CD4-positive, alpha-beta T cell (primary cell): ENCODE measurements at regions of chr13 and their contacts with region 1.

Region 1: DNA sequence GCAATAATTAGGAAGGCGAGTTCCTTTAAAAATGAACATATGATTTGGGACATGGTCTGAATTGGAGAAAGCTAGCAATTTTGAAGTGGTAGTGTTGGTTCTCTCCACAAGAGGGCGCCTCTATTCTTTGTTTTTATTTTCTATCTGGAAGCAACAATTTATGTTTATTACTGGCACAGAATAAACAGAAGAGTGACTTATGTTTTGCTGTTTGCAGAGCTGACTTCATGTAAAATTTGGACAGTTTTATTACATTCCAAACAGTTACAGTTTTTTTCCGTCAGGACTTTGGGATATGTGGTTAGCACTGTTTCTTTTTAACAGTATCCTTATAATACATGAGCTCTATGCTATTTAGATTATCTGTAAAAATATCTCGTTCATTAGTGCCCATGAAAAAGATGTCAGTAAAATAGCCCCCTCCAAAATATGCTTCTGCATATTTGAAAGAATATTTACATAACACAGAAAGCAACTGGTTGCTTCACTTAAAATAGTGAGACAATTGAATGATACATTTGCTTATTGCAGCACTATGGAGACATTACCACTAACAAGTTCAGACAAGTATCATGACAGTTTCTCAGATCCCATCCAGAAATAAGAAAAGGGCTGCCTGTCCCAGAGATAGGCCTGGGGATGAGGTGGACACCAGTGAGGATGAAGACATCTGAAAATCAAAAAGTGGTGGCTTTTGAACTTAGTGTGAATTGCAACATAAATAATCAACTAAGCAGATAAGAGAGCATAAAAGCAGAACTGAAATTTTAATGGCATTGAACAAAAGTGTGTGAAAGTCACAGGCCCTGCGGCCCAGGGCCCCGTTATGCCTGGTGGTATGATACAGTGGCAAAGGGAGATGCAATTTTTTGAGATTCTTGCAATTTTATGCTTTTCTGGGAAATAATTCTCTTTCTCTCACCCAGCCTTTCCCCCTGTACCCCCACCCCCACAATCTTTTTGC is 32.3 kb upstream of the FGF9 start:
- DNase-seq: peak in 9 of 14 experiments; percentile 8 to 67 (median 20)
- ATAC-seq: no peak
- H3K4me3 ChIP-seq: no peak overlapping the region
- H3K4me3 Mint-ChIP-seq: no peak overlapping the region
- H3K27ac ChIP-seq: no peak overlapping the region
- H3K27ac Mint-ChIP-seq: no peak overlapping the region
- H3K4me1 ChIP-seq: no peaks in the 10 kb centered on the region
- H3K4me1 Mint-ChIP-seq: no peaks in the 10 kb centered on the region
- H3K27me3 ChIP-seq: peaks cover 0 to 8% of the 10 kb centered on the region in 2 experiments
- H3K27me3 Mint-ChIP-seq: peaks cover 19% of the 10 kb centered on the region
- CTCF ChIP-seq: peak; percentile 96

Region 2: DNA sequence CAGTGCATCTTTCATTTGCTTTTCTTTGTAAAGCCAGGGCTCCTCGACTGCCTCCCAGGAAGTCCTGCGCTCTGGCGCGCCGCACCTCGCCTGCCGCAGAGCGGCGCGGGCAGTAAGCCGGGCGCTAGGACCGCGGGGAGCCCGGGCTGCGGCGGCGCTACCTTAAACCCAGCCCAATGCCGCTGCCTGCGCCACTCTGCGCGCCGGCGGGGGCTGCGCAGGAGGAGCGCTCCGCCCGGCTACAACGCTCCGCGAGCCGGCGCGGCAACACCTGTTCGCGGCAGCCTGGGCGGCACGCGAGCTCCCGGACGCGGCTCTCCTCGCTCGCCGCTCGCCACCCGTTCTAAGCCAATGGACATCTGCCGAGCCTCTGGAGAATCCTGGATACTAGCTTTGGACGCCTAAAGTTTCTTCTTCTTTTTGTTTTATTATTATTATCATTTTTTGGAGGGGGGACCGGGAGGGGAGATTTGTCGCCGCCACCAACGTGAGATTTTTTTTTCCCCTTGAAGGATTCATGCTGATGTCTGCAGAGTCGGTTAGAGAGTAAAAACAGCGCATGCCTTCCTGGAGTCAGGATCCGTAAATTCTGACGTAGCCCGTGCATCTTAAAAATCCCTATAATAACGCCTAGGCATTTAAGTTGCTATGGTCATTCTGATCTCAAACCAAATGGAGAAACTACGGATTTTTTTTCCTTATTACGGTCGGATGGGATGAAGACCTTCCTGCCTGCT is 32.5 kb after region 1 on chr13 and contains the start of gene FGF9:
- CTCF ChIA-PET with region 1: interaction called, 13 read pairs
- POLR2A ChIA-PET with region 1: interaction called, 20 read pairs
- intact Hi-C with region 1: loop called (anchors 2 to 5 kb)
- DNase-seq: peak; percentile 59 to 93 (median 74)
- ATAC-seq: peak; percentile 72
- H3K4me3 ChIP-seq: peak within 1 kb of the TSS; percentile 81
- H3K4me3 Mint-ChIP-seq: peak within 1 kb of the TSS; percentile 92
- H3K27ac ChIP-seq: peak within 1 kb of the TSS in 1 of 2 donors; percentile 2
- H3K27ac Mint-ChIP-seq: peak within 1 kb of the TSS; percentile 77
- H3K4me1 ChIP-seq: peaks cover 62% of the 10 kb centered on the region
- H3K4me1 Mint-ChIP-seq: peaks cover 45% of the 10 kb centered on the region
- H3K27me3 ChIP-seq: peaks cover 18 to 21% of the 10 kb centered on the region in 2 experiments
- H3K27me3 Mint-ChIP-seq: peaks cover 43% of the 10 kb centered on the region
- CTCF ChIP-seq: no peak
- total RNA-seq, gene FGF9: 2.2 to 3.4 TPM

Region 3: GRCh38 chr13:22055259-22055658 is 416.7 kb after region 1 on chr13:
- CTCF ChIA-PET with region 1: interaction called, 5 read pairs
- POLR2A ChIA-PET with region 1: interaction called, 4 read pairs
- intact Hi-C with region 1: loop called (anchors 5 to 10 kb)
- DNase-seq: no peak
- ATAC-seq: no peak
- H3K4me3 ChIP-seq: no peak overlapping the region
- H3K4me3 Mint-ChIP-seq: no peak overlapping the region
- H3K27ac ChIP-seq: no peak overlapping the region
- H3K27ac Mint-ChIP-seq: no peak overlapping the region
- H3K4me1 ChIP-seq: peaks cover 53% of the 10 kb centered on the region
- H3K4me1 Mint-ChIP-seq: peaks cover 58% of the 10 kb centered on the region
- H3K27me3 ChIP-seq: no peaks in the 10 kb centered on the region
- H3K27me3 Mint-ChIP-seq: no peaks in the 10 kb centered on the region
- CTCF ChIP-seq: no peak

Region 4: DNA sequence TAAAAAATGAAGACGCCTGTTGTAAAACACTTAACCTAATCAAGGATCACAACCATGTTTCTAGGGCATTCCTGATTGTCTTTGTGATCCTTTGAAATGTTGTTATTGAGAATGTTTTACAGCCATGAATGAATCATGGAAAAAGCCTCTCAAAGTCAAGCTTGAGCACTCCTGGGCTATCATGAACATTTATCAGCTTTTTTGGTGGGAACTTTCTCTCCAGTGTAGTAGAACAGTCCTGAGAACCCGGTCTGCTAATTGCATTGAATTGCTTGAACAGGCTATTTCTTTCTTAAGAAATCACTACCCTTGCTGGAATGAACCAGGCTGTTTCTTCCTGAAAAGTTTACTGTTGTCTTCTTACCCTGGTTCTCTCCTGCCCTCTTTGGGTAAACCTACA is 548.7 kb after region 1 on chr13:
- CTCF ChIA-PET with region 1: no interaction called
- POLR2A ChIA-PET with region 1: no interaction called
- intact Hi-C with region 1: loop called in 1 of 2 experiments (anchors 10 kb)
- DNase-seq: peak in 2 of 14 experiments; percentile 8 to 20
- ATAC-seq: no peak
- H3K4me3 ChIP-seq: no peak overlapping the region
- H3K4me3 Mint-ChIP-seq: no peak overlapping the region
- H3K27ac ChIP-seq: no peak overlapping the region
- H3K27ac Mint-ChIP-seq: no peak overlapping the region
- H3K4me1 ChIP-seq: no peaks in the 10 kb centered on the region
- H3K4me1 Mint-ChIP-seq: peaks cover 6% of the 10 kb centered on the region
- H3K27me3 ChIP-seq: no peaks in the 10 kb centered on the region
- H3K27me3 Mint-ChIP-seq: no peaks in the 10 kb centered on the region
- CTCF ChIP-seq: no peak

Region 5: DNA sequence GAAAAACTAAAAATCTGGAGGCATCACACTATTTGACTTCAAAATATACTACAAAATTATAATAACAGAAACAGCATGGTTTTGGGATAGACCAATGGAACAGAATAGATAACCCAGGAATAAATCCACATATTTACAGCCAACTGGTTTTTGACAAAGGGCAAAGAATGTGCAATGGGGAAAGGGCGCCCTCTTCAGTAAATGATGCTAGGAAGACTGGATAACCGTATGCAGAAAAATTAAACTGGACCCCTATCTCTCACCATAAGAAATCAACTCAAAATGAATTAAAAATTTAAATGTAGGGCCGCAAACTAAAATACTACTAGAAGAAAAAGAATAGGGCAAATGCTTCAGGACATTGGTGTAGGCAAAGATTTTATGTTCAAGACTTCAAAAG is 1101.7 kb after region 1 on chr13:
- CTCF ChIA-PET with region 1: no interaction called
- POLR2A ChIA-PET with region 1: no interaction called
- intact Hi-C with region 1: loop called in 1 of 2 experiments (anchors 10 kb)
- DNase-seq: peak in 1 of 14 experiments; percentile 1
- ATAC-seq: no peak
- H3K4me3 ChIP-seq: no peak overlapping the region
- H3K4me3 Mint-ChIP-seq: no peak overlapping the region
- H3K27ac ChIP-seq: no peak overlapping the region
- H3K27ac Mint-ChIP-seq: no peak overlapping the region
- H3K4me1 ChIP-seq: no peaks in the 10 kb centered on the region
- H3K4me1 Mint-ChIP-seq: no peaks in the 10 kb centered on the region
- H3K27me3 ChIP-seq: no peaks in the 10 kb centered on the region
- H3K27me3 Mint-ChIP-seq: peaks cover 8% of the 10 kb centered on the region
- CTCF ChIP-seq: no peak

Region 6: DNA sequence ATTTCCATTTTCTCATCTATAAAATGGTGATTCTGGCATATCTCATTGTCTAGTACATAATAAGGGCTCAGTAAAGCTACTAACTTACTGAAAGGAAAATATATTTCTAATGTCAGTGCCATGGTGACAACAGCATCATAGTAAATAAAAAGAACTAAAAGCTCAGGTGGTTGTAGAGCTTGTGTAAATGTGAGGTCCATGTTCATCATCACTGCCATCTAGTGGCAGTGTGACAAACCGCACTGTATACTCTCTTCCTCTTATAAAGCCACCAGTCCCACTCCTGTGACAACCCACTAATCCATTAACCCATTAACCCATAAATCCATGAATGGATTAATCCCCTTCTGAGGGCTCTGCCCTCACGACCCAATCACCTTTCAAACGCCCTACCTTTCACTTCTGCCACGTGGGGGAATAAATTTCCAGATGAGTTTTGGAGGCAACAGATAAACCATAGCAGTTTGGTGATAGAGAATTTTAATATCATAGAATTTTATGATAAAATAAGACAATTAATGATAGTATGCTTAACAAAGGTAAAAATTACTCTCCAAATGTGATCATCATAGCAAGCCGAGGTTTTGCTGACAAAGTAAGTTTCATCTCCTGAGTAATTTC is 1381.7 kb after region 1 on chr13:
- CTCF ChIA-PET with region 1: no interaction called
- POLR2A ChIA-PET with region 1: no interaction called
- intact Hi-C with region 1: loop called in 1 of 2 experiments (anchors 5 kb)
- DNase-seq: peak in 8 of 14 experiments; percentile 1 to 57 (median 14)
- ATAC-seq: peak; percentile 52
- H3K4me3 ChIP-seq: no peak overlapping the region
- H3K4me3 Mint-ChIP-seq: no peak overlapping the region
- H3K27ac ChIP-seq: no peak overlapping the region
- H3K27ac Mint-ChIP-seq: no peak overlapping the region
- H3K4me1 ChIP-seq: no peaks in the 10 kb centered on the region
- H3K4me1 Mint-ChIP-seq: no peaks in the 10 kb centered on the region
- H3K27me3 ChIP-seq: no peaks in the 10 kb centered on the region
- H3K27me3 Mint-ChIP-seq: peaks cover 20% of the 10 kb centered on the region
- CTCF ChIP-seq: peak; percentile 72